ENCODE measurements at regions of chr19 and their contacts with region 1.

Region 1: GRCh38 chr19:5803752-5804515 is 933 bp upstream of the NRTN start:
- DNase-seq: peak; percentile 93 to 98
- H3K4me3 ChIP-seq: peak overlapping the region; percentile 40
- H3K4me3 Mint-ChIP-seq: peak overlapping the region; percentile 75
- H3K27ac Mint-ChIP-seq: peak overlapping the region; percentile 53
- H3K4me1 ChIP-seq: 0 out of 2 replicates have a peak, but pooled peaks cover 3% of the 10 kb centered on the region
- H3K4me1 Mint-ChIP-seq: no peaks in the 10 kb centered on the region
- H3K27me3 ChIP-seq: no peaks in the 10 kb centered on the region
- H3K27me3 Mint-ChIP-seq: no peaks in the 10 kb centered on the region
- CTCF ChIP-seq: peak; percentile 91 to 97

Region 2: DNA sequence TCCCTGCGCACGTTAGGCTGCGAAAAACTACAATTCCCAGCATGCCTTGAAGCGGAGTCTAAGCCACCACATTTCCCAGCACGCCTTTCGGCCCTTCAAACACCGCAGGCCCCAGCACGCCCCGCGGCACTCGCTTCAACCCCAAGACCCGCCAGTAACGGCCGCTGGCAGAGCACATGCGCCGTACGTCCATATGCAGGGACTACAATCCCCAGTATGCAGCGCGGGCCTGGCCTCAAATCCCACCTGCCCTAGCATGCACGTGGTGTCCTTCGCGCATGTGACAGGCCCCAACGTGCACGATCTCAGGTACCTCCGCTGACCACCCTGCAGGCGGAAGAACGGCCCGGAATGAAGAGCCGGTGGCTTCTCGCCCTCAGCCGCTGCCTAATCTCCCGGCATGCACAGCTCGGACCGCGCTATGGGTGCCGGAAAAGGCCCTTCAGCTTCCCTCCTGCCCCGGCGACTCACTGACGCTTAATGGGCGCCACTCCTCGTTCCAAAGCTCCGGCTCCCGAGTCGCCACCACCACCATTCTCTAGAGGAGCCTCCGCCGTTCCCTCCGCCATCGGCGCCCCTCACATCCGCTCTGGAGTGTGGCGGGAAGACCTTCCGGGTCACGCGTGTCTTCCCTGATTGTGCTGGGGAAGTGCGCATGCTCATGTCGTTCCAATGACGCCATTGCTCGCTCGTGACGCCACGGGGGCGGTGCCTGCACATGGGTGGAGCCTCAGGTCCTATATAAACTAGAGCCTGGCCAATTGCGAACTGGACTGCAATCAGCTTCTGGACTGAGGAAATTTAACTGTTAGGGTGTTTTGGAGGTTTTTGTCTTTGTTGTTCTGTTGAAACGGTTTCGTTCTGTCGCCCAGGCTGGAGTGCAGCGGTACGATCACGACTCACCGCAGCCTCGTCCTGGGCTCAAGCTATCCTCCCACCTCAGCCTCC is 13.1 kb before region 1 on chr19 and contains the start of gene DUS3L:
- CTCF ChIA-PET with region 1: interaction called, 11 read pairs
- POLR2A ChIA-PET with region 1: interaction called, 3 read pairs
- intact Hi-C with region 1: no loop called
- DNase-seq: peak; percentile 96 to 98
- H3K4me3 ChIP-seq: peak within 1 kb of the TSS; percentile 86
- H3K4me3 Mint-ChIP-seq: peak within 1 kb of the TSS; percentile 98
- H3K27ac Mint-ChIP-seq: peak within 1 kb of the TSS; percentile 100
- H3K4me1 ChIP-seq: no peaks in the 10 kb centered on the region
- H3K4me1 Mint-ChIP-seq: no peaks in the 10 kb centered on the region
- H3K27me3 ChIP-seq: no peaks in the 10 kb centered on the region
- H3K27me3 Mint-ChIP-seq: no peaks in the 10 kb centered on the region
- CTCF ChIP-seq: no peak
- total RNA-seq, gene DUS3L: 73.3 and 75.4 TPM in 2 replicates

Region 3: GRCh38 chr19:5827891-5828660 is 24.1 kb after region 1 on chr19:
- CTCF ChIA-PET with region 1: interaction called, 39 read pairs
- POLR2A ChIA-PET with region 1: interaction called, 15 read pairs
- intact Hi-C with region 1: loop called (anchors 1 kb)
- DNase-seq: peak; percentile 95 to 97
- H3K4me3 ChIP-seq: peak overlapping the region; percentile 88
- H3K4me3 Mint-ChIP-seq: peak overlapping the region; percentile 88
- H3K27ac Mint-ChIP-seq: peak overlapping the region; percentile 80
- H3K4me1 ChIP-seq: peaks cover 5% of the 10 kb centered on the region; the same call in 1 of the 2 replicates
- H3K4me1 Mint-ChIP-seq: peaks cover 7% of the 10 kb centered on the region
- H3K27me3 ChIP-seq: no peaks in the 10 kb centered on the region
- H3K27me3 Mint-ChIP-seq: no peaks in the 10 kb centered on the region
- CTCF ChIP-seq: no peak

Region 4: GRCh38 chr19:5891938-5892771 is 88.2 kb after region 1 on chr19:
- CTCF ChIA-PET with region 1: interaction called, 19 read pairs
- POLR2A ChIA-PET with region 1: no interaction called
- intact Hi-C with region 1: loop called (anchors 2 kb)
- DNase-seq: peak in 1 of 2 experiments; percentile 64
- H3K4me3 ChIP-seq: no peak overlapping the region
- H3K4me3 Mint-ChIP-seq: no peak overlapping the region
- H3K27ac Mint-ChIP-seq: peak overlapping the region; percentile 65
- H3K4me1 ChIP-seq: peaks cover 5% of the 10 kb centered on the region; the same call in 1 of the 2 replicates
- H3K4me1 Mint-ChIP-seq: peaks cover 9% of the 10 kb centered on the region
- H3K27me3 ChIP-seq: no peaks in the 10 kb centered on the region
- H3K27me3 Mint-ChIP-seq: no peaks in the 10 kb centered on the region
- CTCF ChIP-seq: peak; percentile 74 to 86

Region 5: DNA sequence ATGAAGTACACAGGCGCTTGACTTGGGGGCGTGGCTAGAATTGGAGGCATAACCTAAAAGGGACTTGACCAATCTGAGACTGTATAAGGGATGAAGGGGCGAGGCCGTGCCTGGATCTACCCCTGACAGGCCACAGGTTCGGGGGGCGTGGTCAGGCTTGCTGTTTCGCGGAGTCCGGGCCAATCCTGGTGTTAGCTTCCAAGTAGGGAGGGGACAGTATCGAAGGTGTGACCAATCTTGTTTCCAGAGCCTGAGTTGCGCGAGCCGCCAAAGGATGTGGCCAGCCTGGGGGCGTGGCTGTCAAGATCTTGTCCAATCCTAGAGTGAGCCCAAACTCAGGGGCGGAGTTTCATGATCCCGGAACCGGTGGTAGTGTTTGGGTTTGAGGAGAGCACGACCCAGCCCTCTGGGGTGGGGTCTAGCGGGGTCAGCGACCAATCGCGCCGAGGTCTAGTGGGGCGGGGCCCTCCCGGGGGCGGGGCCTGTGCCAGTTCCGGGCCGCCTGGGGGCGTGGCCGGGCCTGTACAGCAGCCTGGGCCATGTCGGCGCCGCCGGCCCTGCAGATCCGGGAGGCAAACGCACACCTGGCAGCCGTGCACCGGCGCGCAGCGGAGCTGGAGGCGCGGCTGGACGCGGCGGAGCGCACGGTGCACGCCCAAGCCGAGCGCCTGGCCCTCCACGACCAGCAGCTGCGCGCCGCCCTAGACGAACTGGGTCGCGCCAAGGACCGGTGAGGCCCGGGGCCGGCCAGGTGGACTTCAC is 100.6 kb after region 1 on chr19 and contains the start of gene VMAC:
- CTCF ChIA-PET with region 1: interaction called, 56 read pairs
- POLR2A ChIA-PET with region 1: interaction called, 7 read pairs
- intact Hi-C with region 1: loop called (anchors 1 kb)
- DNase-seq: peak; percentile 99 to 100
- H3K4me3 ChIP-seq: peak within 1 kb of the TSS; percentile 86
- H3K4me3 Mint-ChIP-seq: peak within 1 kb of the TSS; percentile 82
- H3K27ac Mint-ChIP-seq: peak within 1 kb of the TSS; percentile 97
- H3K4me1 ChIP-seq: no peaks in the 10 kb centered on the region; the same call in 1 of the 2 replicates
- H3K4me1 Mint-ChIP-seq: no peaks in the 10 kb centered on the region
- H3K27me3 ChIP-seq: no peaks in the 10 kb centered on the region
- H3K27me3 Mint-ChIP-seq: no peaks in the 10 kb centered on the region
- CTCF ChIP-seq: no peak
- total RNA-seq, gene VMAC: 4.7 and 4.8 TPM in 2 replicates

Region 6: DNA sequence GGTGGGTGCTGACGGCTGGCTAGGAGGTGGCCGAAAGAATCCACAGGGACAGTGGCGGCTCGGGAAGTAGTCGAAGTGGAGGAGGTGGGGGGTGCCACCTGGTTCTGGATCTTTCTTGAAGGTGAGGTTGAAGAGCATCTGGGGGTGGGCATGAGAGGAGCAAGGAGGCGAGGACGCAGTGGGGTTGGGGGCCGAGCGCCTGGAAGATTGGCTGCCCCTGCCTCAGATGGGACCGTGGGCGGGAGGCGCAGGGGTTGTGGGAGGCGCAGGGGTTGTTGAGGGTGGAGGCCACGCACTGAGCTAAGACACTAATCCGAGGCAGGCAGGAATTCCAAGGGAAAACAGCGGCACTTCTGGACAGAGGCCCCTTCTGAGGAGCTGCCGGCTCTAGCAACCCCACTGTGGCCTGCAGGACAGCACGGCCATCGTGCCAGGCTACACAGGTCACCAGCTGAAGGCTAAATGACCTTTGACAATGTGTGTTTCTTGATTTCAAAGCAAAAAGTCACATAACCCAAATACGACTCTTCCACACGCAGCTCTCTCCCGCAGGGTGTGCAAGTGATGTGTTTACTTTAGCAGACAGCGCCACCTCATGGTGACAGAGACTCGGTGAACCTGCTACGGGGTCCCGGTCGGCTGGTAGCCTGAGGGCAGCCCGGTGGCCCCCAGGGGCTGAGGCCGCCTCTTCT is 218.1 kb after region 1 on chr19:
- CTCF ChIA-PET with region 1: interaction called, 10 read pairs
- POLR2A ChIA-PET with region 1: no interaction called
- intact Hi-C with region 1: no loop called
- DNase-seq: peak; percentile 65
- H3K4me3 ChIP-seq: no peak overlapping the region
- H3K4me3 Mint-ChIP-seq: no peak overlapping the region
- H3K27ac Mint-ChIP-seq: no peak overlapping the region
- H3K4me1 ChIP-seq: peaks cover 3% of the 10 kb centered on the region
- H3K4me1 Mint-ChIP-seq: no peaks in the 10 kb centered on the region
- H3K27me3 ChIP-seq: no peaks in the 10 kb centered on the region
- H3K27me3 Mint-ChIP-seq: no peaks in the 10 kb centered on the region
- CTCF ChIP-seq: peak; percentile 63 to 67